CD8-positive, alpha-beta T cell (primary cell): ENCODE measurements at regions of chr21 and their contacts with region 1.

Region 1: DNA sequence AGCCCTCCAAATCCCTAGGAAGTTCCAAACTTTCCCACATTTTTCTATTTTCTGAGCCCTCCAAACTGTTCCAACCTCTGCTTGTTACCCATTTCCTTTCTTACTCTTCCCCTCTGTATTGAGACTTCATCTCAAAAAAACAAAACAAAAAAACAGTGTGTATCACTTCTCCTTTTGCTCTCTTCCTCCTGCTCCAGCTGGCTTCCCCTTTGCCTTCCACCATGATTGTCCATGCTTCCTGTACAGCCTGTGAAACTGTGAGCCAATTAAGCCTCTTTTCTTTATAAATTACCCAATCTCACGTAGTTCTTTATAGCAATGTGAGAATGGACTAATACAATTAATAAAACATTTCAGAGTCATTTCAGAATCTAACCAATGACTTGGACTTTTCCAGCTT is 69.6 kb upstream of the KRTAP19-8 start:
- DNase-seq: no peak
- ATAC-seq: no peak
- H3K4me3 ChIP-seq: no peak overlapping the region
- H3K4me3 Mint-ChIP-seq: no peak overlapping the region
- H3K27ac ChIP-seq: no peak overlapping the region
- H3K27ac Mint-ChIP-seq: peak overlapping the region; percentile 12
- H3K4me1 ChIP-seq: no peaks in the 10 kb centered on the region
- H3K4me1 Mint-ChIP-seq: peaks cover 12% of the 10 kb centered on the region
- H3K27me3 ChIP-seq: no peaks in the 10 kb centered on the region
- H3K27me3 Mint-ChIP-seq: no peaks in the 10 kb centered on the region
- CTCF ChIP-seq: no peak

Region 2: GRCh38 chr21:31090376-31090775 is 17.5 kb before region 1 on chr21:
- CTCF ChIA-PET with region 1: no interaction called
- POLR2A ChIA-PET with region 1: no interaction called
- intact Hi-C with region 1: no loop called
- DNase-seq: no peak
- ATAC-seq: no peak
- H3K4me3 ChIP-seq: no peak overlapping the region
- H3K4me3 Mint-ChIP-seq: no peak overlapping the region
- H3K27ac ChIP-seq: no peak overlapping the region
- H3K27ac Mint-ChIP-seq: no peak overlapping the region
- H3K4me1 ChIP-seq: no peaks in the 10 kb centered on the region
- H3K4me1 Mint-ChIP-seq: peaks cover 8% of the 10 kb centered on the region
- H3K27me3 ChIP-seq: peaks cover 0 to 2% of the 10 kb centered on the region in 2 experiments
- H3K27me3 Mint-ChIP-seq: no peaks in the 10 kb centered on the region
- CTCF ChIP-seq: no peak

Region 3: DNA sequence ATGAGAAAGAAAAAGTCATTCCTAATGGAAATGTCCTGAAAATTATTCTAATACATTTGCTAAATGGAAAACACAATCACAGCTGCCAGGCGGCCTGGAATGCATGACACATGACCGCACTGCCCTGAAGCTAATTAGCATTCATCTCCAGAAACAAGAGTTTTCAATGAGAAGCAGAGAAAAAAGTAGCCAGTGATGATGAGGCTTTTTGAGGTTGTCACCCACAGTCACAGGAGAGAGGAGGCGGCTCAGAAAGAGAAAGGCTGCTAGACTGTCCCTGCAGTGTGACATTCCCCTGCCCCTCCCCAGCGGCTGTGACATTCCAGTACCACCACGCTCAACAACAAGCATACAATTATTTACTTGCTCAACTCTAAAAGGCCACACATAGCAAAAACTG is 53.3 kb after region 1 on chr21:
- CTCF ChIA-PET with region 1: interaction called, 10 read pairs
- POLR2A ChIA-PET with region 1: no interaction called
- intact Hi-C with region 1: no loop called
- DNase-seq: no peak
- ATAC-seq: no peak
- H3K4me3 ChIP-seq: no peak overlapping the region
- H3K4me3 Mint-ChIP-seq: peak overlapping the region; percentile 26
- H3K27ac ChIP-seq: no peak overlapping the region
- H3K27ac Mint-ChIP-seq: peak overlapping the region; percentile 93
- H3K4me1 ChIP-seq: peaks cover 76% of the 10 kb centered on the region
- H3K4me1 Mint-ChIP-seq: peaks cover 80% of the 10 kb centered on the region
- H3K27me3 ChIP-seq: no peaks in the 10 kb centered on the region
- H3K27me3 Mint-ChIP-seq: no peaks in the 10 kb centered on the region
- CTCF ChIP-seq: no peak

Region 4: GRCh38 chr21:31173881-31174555 is 66.1 kb after region 1 on chr21:
- CTCF ChIA-PET with region 1: interaction called, 53 read pairs
- POLR2A ChIA-PET with region 1: no interaction called
- intact Hi-C with region 1: no loop called
- DNase-seq: peak in 1 of 9 experiments; percentile 35
- ATAC-seq: no peak
- H3K4me3 ChIP-seq: no peak overlapping the region
- H3K4me3 Mint-ChIP-seq: no peak overlapping the region
- H3K27ac ChIP-seq: no peak overlapping the region
- H3K27ac Mint-ChIP-seq: peak overlapping the region; percentile 22
- H3K4me1 ChIP-seq: peaks cover 31% of the 10 kb centered on the region
- H3K4me1 Mint-ChIP-seq: peaks cover 62% of the 10 kb centered on the region
- H3K27me3 ChIP-seq: no peaks in the 10 kb centered on the region
- H3K27me3 Mint-ChIP-seq: no peaks in the 10 kb centered on the region
- CTCF ChIP-seq: no peak

Region 5: GRCh38 chr21:31659536-31660258 is 551.8 kb after region 1 on chr21 and contains the start of gene SOD1:
- CTCF ChIA-PET with region 1: no interaction called
- POLR2A ChIA-PET with region 1: no interaction called
- intact Hi-C with region 1: no loop called
- DNase-seq: peak; percentile 93 to 98 (median 96)
- ATAC-seq: peak; percentile 93
- H3K4me3 ChIP-seq: peak within 1 kb of the TSS; percentile 73 to 83
- H3K4me3 Mint-ChIP-seq: peak within 1 kb of the TSS; percentile 100
- H3K27ac ChIP-seq: peak within 1 kb of the TSS; percentile 77 to 87
- H3K27ac Mint-ChIP-seq: peak within 1 kb of the TSS; percentile 100
- H3K4me1 ChIP-seq: peaks cover 55% of the 10 kb centered on the region
- H3K4me1 Mint-ChIP-seq: peaks cover 72% of the 10 kb centered on the region
- H3K27me3 ChIP-seq: no peaks in the 10 kb centered on the region
- H3K27me3 Mint-ChIP-seq: no peaks in the 10 kb centered on the region
- CTCF ChIP-seq: no peak
- total RNA-seq, gene SOD1: 125 to 140 TPM

Region 6: DNA sequence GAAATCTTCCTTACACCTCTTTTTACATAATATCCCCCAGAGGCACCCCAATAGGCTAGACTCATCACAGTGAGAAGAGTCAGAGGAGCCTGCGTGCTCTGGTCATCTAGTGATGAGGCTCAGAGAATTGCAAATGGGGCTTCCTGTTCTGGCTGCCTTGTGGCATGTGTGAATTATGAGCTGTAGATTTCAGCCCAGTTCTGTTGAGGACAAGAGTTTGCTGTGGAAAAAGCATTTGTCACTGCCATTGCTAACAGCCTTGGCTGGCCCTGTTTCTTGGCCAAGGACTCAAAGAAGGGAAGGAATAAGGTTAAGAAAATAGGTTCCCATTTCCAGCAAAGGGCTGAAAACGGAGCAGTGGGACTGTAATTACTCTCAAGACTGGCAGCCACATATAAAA is 1221.5 kb after region 1 on chr21:
- CTCF ChIA-PET with region 1: no interaction called
- POLR2A ChIA-PET with region 1: no interaction called
- intact Hi-C with region 1: no loop called
- DNase-seq: no peak
- ATAC-seq: no peak
- H3K4me3 ChIP-seq: no peak overlapping the region
- H3K4me3 Mint-ChIP-seq: no peak overlapping the region
- H3K27ac ChIP-seq: no peak overlapping the region
- H3K27ac Mint-ChIP-seq: no peak overlapping the region
- H3K4me1 ChIP-seq: no peaks in the 10 kb centered on the region
- H3K4me1 Mint-ChIP-seq: no peaks in the 10 kb centered on the region
- H3K27me3 ChIP-seq: no peaks in the 10 kb centered on the region
- H3K27me3 Mint-ChIP-seq: no peaks in the 10 kb centered on the region
- CTCF ChIP-seq: no peak